Gastrocnemius medialis (tissue), 4 donors: ENCODE measurements at regions of chr12 and their contacts with region 1.

Region 1: GRCh38 chr12:30862486-30862885 is 64.1 kb upstream of the TSPAN11 start:
- DNase-seq: no peak
- ATAC-seq: no peak
- H3K4me3 ChIP-seq: no peak overlapping the region
- H3K27ac ChIP-seq: no peak overlapping the region
- H3K4me1 ChIP-seq: no peaks in the 10 kb centered on the region
- H3K27me3 ChIP-seq: no peaks in the 10 kb centered on the region
- CTCF ChIP-seq: no peak
- POLR2A ChIP-seq: no peak

Region 2: GRCh38 chr12:30882706-30883105 is 20.2 kb after region 1 on chr12:
- in situ Hi-C with region 1: no loop called
- intact Hi-C with region 1: no loop called
- DNase-seq: no peak
- ATAC-seq: no peak
- H3K4me3 ChIP-seq: no peak overlapping the region
- H3K27ac ChIP-seq: no peak overlapping the region
- H3K4me1 ChIP-seq: no peaks in the 10 kb centered on the region
- H3K27me3 ChIP-seq: peaks cover 0 to 3% (median 0%) of the 10 kb centered on the region in 3 donors
- CTCF ChIP-seq: no peak
- POLR2A ChIP-seq: no peak

Region 3: GRCh38 chr12:31267966-31268365 is 405.5 kb after region 1 on chr12:
- in situ Hi-C with region 1: loop called in 1 of 4 experiments (anchors 10 kb)
- intact Hi-C with region 1: no loop called
- DNase-seq: no peak
- ATAC-seq: no peak
- H3K4me3 ChIP-seq: no peak overlapping the region
- H3K27ac ChIP-seq: no peak overlapping the region
- H3K4me1 ChIP-seq: no peaks in the 10 kb centered on the region
- H3K27me3 ChIP-seq: no peaks in the 10 kb centered on the region
- CTCF ChIP-seq: no peak
- POLR2A ChIP-seq: no peak